ENCODE measurements at regions of chr11 and their contacts with region 1.

Region 1: GRCh38 chr11:110376711-110377324 is 52.9 kb upstream of the FDX1 start:
- DNase-seq: peak; percentile 79 to 87
- H3K4me3 ChIP-seq: no peak overlapping the region
- H3K27ac ChIP-seq: peak overlapping the region; percentile 43 to 72 (median 69)
- H3K4me1 ChIP-seq: peaks cover 0 to 6% of the 10 kb centered on the region in 2 donors
- H3K27me3 ChIP-seq: no peaks in the 10 kb centered on the region
- CTCF ChIP-seq: peak; percentile 40 to 86 (median 72)
- POLR2A ChIP-seq: no peak

Region 2: GRCh38 chr11:110200241-110200640 is 176.6 kb before region 1 on chr11:
- intact Hi-C with region 1: loop called (anchors 5 kb)
- DNase-seq: no peak
- H3K4me3 ChIP-seq: no peak overlapping the region
- H3K27ac ChIP-seq: no peak overlapping the region
- H3K4me1 ChIP-seq: no peaks in the 10 kb centered on the region
- H3K27me3 ChIP-seq: no peaks in the 10 kb centered on the region
- CTCF ChIP-seq: no peak
- POLR2A ChIP-seq: no peak

Region 3: DNA sequence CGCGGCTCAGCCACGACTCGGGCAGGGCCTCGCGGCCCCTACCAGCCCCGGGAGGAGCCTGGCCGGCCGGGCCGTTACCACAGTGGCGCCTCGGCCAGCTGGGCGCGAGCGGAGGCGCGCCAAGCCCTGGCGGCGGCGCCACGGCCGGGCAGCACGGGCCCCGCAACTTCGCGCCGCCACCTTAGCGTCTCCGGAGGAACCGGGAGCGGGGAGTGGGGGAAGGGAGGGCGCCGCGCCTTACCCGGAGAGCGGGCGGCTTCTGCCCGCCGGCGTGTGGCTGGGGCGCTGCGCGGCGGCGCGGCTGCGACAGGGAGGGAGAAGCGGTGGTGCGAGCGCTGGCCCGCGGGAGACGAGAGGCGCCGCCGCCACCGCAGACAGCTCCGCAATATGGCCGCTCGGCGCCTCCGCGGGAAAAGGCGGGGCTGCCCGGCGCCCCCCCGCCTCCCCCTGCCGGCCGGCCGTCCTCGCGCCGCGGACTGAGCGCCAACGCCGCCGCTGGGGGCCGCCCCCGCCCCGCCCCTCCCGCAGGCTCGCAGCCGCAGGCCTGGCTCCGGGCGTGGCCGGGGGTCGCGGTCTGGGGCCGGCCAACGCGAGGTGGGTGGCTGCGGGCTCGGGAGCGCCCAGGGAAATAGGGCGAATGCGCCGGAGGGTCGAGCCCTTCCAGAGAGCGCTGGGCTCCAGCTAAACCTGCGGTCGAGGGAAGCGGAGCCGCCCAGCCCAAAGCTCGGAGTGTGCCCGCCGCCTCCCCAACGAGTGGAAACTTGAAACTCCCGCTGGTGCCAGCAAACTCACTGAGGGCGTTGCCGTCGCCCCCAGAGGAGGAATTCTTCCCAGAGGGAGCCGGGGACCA is 80.4 kb before region 1 on chr11 and contains the start of gene RDX:
- intact Hi-C with region 1: loop called (anchors 10 kb)
- DNase-seq: peak; percentile 95 to 97
- H3K4me3 ChIP-seq: peak within 1 kb of the TSS; percentile 58 to 93 (median 85)
- H3K27ac ChIP-seq: peak within 1 kb of the TSS; percentile 97 to 99 (median 99)
- H3K4me1 ChIP-seq: peaks cover 25 to 42% of the 10 kb centered on the region in 2 donors
- H3K27me3 ChIP-seq: no peaks in the 10 kb centered on the region
- CTCF ChIP-seq: peak in 3 of 6 experiments; percentile 5 to 30 (median 22)
- POLR2A ChIP-seq: peak in 1 of 2 donors; percentile 67
- total RNA-seq, gene RDX: 83.2 to 138 (median 107) TPM

Region 4: GRCh38 chr11:110565357-110566336 is 188.8 kb after region 1 on chr11:
- intact Hi-C with region 1: no loop called
- DNase-seq: peak; percentile 59 to 71
- H3K4me3 ChIP-seq: no peak overlapping the region
- H3K27ac ChIP-seq: no peak overlapping the region
- H3K4me1 ChIP-seq: peaks cover 8 to 13% of the 10 kb centered on the region in 2 donors
- H3K27me3 ChIP-seq: no peaks in the 10 kb centered on the region
- CTCF ChIP-seq: no peak
- POLR2A ChIP-seq: no peak

Region 5: DNA sequence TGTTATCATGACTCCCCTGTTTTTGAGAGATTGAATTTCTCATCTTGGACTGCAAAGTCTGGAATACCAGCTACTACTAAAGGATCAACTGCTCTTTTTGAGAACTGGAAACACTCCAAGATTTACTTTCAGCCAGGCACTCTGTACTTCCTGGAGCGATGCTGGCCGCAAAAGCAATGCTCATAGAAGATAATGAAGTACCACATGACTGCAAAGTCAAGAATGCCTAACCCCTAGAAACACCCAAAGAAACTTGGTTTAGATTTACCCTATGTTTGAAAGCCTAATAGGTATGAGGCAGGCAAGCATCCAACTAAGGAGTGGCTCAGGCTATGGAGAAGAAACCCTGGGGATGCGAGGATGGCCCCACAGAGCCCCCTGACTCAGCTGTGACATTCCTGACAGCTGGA is 383.2 kb after region 1 on chr11:
- intact Hi-C with region 1: no loop called
- DNase-seq: peak; percentile 67 to 69
- H3K4me3 ChIP-seq: no peak overlapping the region
- H3K27ac ChIP-seq: peak overlapping the region; percentile 17 to 54 (median 53)
- H3K4me1 ChIP-seq: peaks cover 28 to 42% of the 10 kb centered on the region in 2 donors
- H3K27me3 ChIP-seq: no peaks in the 10 kb centered on the region
- CTCF ChIP-seq: no peak
- POLR2A ChIP-seq: no peak